Activated CD8-positive, alpha-beta T cell treated with anti-CD3 and anti-CD28 coated beads for 36 hours (primary cell): ENCODE measurements at regions of chr2 and their contacts with region 1.

Region 1: GRCh38 chr2:118221666-118222594 is 133.7 kb downstream of the INSIG2 start:
- DNase-seq: peak; percentile 52
- ATAC-seq: peak; percentile 69
- H3K4me3 Mint-ChIP-seq: no peak overlapping the region
- H3K27ac Mint-ChIP-seq: no peak overlapping the region
- H3K4me1 Mint-ChIP-seq: peaks cover 8% of the 10 kb centered on the region
- H3K27me3 Mint-ChIP-seq: peaks cover 55% of the 10 kb centered on the region
- CTCF ChIP-seq: peak; percentile 81

Region 2: GRCh38 chr2:118202707-118203303 is 19.1 kb before region 1 on chr2:
- CTCF ChIA-PET with region 1: interaction called, 16 read pairs
- POLR2A ChIA-PET with region 1: no interaction called
- intact Hi-C with region 1: no loop called
- DNase-seq: peak; percentile 71
- ATAC-seq: peak; percentile 88
- H3K4me3 Mint-ChIP-seq: no peak overlapping the region
- H3K27ac Mint-ChIP-seq: no peak overlapping the region
- H3K4me1 Mint-ChIP-seq: peaks cover 7% of the 10 kb centered on the region
- H3K27me3 Mint-ChIP-seq: peaks cover 23% of the 10 kb centered on the region
- CTCF ChIP-seq: peak; percentile 78

Region 3: DNA sequence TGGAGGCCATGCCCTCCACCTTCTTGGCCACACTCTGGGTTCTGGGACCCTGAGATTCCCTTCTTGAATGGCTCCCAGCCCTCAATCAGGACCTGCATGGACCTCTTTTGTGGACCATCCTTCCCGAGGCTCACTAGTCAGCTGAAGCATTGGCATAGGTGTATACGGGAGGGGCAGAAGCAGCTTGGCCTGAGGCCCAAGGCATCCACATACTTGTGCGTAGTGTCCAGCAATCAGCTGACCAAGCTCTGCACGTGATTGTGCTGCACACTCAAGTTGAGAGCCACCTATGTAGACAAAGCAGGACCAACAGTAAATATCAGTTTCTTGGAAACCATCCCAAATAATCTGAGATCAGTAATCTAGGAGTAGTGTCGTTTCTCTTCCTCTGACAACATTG is 14.0 kb before region 1 on chr2:
- CTCF ChIA-PET with region 1: interaction called, 16 read pairs
- POLR2A ChIA-PET with region 1: no interaction called
- intact Hi-C with region 1: no loop called
- DNase-seq: no peak
- ATAC-seq: no peak
- H3K4me3 Mint-ChIP-seq: no peak overlapping the region
- H3K27ac Mint-ChIP-seq: no peak overlapping the region
- H3K4me1 Mint-ChIP-seq: peaks cover 2% of the 10 kb centered on the region
- H3K27me3 Mint-ChIP-seq: peaks cover 34% of the 10 kb centered on the region
- CTCF ChIP-seq: no peak

Region 4: GRCh38 chr2:118242216-118242615 is 20.3 kb after region 1 on chr2:
- CTCF ChIA-PET with region 1: interaction called, 14 read pairs
- POLR2A ChIA-PET with region 1: no interaction called
- intact Hi-C with region 1: no loop called
- DNase-seq: no peak
- ATAC-seq: peak; percentile 68
- H3K4me3 Mint-ChIP-seq: no peak overlapping the region
- H3K27ac Mint-ChIP-seq: no peak overlapping the region
- H3K4me1 Mint-ChIP-seq: no peaks in the 10 kb centered on the region
- H3K27me3 Mint-ChIP-seq: peaks cover 23% of the 10 kb centered on the region
- CTCF ChIP-seq: no peak

Region 5: DNA sequence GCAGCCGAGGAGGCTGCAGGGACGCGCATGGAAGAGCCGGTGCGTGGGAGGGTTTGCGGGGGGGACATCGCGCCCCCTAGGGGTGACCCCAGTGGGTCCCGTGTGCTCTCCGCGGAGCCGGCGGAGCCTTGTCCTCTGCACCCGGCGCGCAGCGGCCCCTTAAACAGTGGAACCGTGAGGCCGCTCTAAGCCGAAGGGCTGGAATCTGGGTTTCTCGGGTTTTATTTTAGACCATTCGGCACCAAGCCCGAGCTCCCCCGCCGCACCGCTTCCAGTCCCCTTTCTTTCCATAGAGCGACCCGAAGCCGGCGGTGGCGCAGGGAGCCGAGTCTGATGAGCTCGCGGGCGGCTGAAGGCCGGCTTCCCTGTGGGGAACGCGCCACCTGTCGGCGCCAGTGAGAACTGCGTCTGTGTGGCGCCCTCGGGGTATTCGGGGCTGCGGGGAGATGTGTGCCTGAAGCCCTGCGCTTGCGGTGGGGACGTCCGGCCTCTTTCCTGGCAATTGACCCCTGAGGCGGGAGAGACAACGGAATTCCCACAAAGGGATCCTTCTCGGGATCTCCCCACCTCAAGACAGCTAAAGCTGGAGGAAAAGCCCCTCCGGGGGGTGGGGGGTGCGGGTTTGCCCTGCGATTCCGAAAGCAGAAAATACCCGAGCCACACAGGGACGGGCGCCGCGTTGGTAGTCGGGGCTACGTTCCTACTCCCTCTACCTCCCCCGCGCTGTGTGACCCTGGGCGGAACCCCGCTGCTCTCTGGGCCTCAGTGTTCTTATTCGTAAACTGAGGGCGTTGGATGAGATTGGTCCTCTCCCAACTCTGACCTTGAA is 633.7 kb after region 1 on chr2:
- CTCF ChIA-PET with region 1: interaction called, 50 read pairs
- POLR2A ChIA-PET with region 1: interaction called, 3 read pairs
- intact Hi-C with region 1: loop called (anchors 5 kb)
- DNase-seq: peak; percentile 86
- ATAC-seq: peak; percentile 95
- H3K4me3 Mint-ChIP-seq: peak overlapping the region; percentile 48
- H3K27ac Mint-ChIP-seq: no peak overlapping the region
- H3K4me1 Mint-ChIP-seq: peaks cover 23% of the 10 kb centered on the region
- H3K27me3 Mint-ChIP-seq: peaks cover 75% of the 10 kb centered on the region
- CTCF ChIP-seq: peak; percentile 96